Vagina (tissue), 2 donors: ENCODE measurements at regions of chr5 and their contacts with region 1.

Region 1: GRCh38 chr5:115586601-115587048 is 15.7 kb downstream of the TICAM2 start:
- DNase-seq: no peak
- H3K4me3 ChIP-seq: no peak overlapping the region
- H3K27ac ChIP-seq: no peak overlapping the region
- H3K4me1 ChIP-seq: no peaks in the 10 kb centered on the region
- H3K27me3 ChIP-seq: no peaks in the 10 kb centered on the region
- CTCF ChIP-seq: peak; percentile 33 to 59 (median 36)
- POLR2A ChIP-seq: no peak

Region 2: DNA sequence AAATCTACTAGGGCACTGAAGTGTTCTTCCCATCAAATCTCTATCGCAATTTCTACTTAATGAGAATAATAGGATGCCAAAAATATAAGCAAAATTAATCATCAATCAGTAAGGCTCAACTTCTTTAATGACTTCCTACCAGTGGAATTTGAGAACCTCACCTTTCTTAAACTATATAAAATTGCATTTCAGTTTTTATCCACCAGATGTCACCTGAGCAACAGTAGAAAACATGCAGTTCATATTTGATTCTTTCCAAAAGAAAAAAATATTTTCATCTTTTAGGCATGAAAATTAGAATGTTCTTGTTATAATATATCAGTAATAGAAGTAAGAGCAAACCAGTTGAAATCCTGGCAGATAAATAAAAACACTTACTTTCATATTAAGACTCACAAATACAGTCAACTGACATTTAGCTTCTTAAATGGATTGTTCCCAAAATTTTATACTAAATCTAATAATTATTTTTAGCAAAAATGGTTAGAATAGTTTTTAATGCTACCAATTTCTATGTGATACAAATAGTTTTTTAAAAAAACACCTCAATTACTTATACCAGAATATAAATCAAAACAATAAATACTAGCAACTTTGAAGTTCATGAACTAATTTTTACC is 276.8 kb before region 1 on chr5:
- intact Hi-C with region 1: loop called (anchors 5 kb)
- DNase-seq: no peak
- H3K4me3 ChIP-seq: no peak overlapping the region
- H3K27ac ChIP-seq: no peak overlapping the region
- H3K4me1 ChIP-seq: no peaks in the 10 kb centered on the region
- H3K27me3 ChIP-seq: no peaks in the 10 kb centered on the region
- CTCF ChIP-seq: peak; percentile 52 to 88 (median 56)
- POLR2A ChIP-seq: no peak